ENCODE measurements at regions of chr12 and their contacts with region 1.

Region 1: GRCh38 chr12:56206457-56207166 is 15.1 kb downstream of the RNF41 start:
- DNase-seq: peak; percentile 67
- H3K4me3 Mint-ChIP-seq: no peak overlapping the region
- H3K27ac Mint-ChIP-seq: no peak overlapping the region
- H3K4me1 Mint-ChIP-seq: peaks cover 2% of the 10 kb centered on the region
- H3K27me3 Mint-ChIP-seq: no peaks in the 10 kb centered on the region

Region 2: GRCh38 chr12:56258057-56258819 is 51.6 kb after region 1 on chr12 and contains the start of gene ANKRD52:
- CTCF ChIA-PET with region 1: interaction called, 9 read pairs
- intact Hi-C with region 1: loop called (anchors 1 kb)
- DNase-seq: peak; percentile 72
- H3K4me3 Mint-ChIP-seq: peak within 1 kb of the TSS; percentile 83
- H3K27ac Mint-ChIP-seq: peak within 1 kb of the TSS; percentile 59
- H3K4me1 Mint-ChIP-seq: peaks cover 18% of the 10 kb centered on the region
- H3K27me3 Mint-ChIP-seq: no peaks in the 10 kb centered on the region
- total RNA-seq, gene ANKRD52: 23.6 to 25.6 TPM

Measured in activated naive CD4-positive, alpha-beta T cell treated with anti-CD3 and anti-CD28 coated beads for 36 hours (primary cell).